ENCODE measurements at regions of chr12 and their contacts with region 1.

Region 1: DNA sequence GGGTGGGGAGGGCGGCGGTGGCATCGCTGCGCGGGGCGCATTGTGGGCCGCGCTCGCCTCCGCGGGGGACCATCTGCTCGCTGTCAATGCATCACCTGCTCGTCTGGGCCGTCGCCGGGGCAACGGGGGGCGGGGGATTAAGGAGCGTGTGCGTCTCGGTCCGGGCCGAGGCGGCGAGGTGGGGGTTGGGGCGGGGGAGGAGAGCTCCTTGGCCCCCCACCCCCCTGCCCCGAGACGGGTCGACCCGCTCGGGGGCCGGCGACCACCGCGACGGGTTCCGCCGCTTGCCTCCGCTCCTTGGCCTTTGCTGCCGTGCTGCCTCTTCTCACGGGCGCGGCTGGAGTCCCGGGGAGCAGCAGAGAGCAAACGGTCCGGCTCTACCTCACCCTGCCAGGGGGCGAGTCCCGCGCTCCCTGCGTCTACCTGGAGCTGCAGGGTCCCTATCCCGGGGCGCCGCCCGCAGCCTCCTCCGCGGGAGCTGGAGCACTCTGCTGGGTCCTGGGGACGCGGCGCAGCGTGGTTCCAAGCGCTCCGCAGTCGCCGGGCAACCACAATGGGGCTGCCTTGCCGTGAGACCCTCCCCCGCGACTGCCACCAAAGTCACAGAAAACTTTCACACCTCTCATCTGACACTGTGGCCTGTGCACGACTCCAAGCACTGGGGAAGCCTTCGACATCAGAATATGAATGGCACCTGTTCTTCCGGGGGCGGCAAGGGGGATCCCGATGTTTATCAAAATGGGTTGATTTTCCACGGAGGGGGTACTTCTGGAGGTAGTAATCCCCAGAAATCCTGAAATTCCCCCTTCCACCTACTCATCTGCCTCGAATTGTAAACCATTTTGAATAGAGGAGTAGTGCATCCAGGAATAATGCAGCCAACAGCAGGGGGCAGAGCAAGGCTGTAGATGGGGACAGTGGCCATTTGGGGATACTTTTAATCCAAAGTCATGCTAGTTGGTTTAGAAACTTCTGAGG is at the start of gene C12orf42:
- DNase-seq: peak; percentile 75 to 80
- ATAC-seq: peak; percentile 91 to 95
- H3K4me3 ChIP-seq: peak within 1 kb of the TSS; percentile 54
- H3K27ac ChIP-seq: peak within 1 kb of the TSS; percentile 26 to 72; a peak in 4 of 6 replicates
- H3K4me1 ChIP-seq: peaks cover 14% of the 10 kb centered on the region; the same call in 2 of the 3 replicates
- CTCF ChIP-seq: peak; percentile 86
- EP300 ChIP-seq: no peak
- POLR2A ChIP-seq: no peak
- RAD21 ChIP-seq: peak; percentile 85 to 92
- polyA plus RNA-seq, gene C12orf42: not detected in 2 replicates

Region 2: GRCh38 chr12:103326190-103326589 is 169.6 kb before region 1 on chr12:
- CTCF ChIA-PET with region 1: no interaction called
- POLR2A ChIA-PET with region 1: no interaction called
- DNase-seq: peak; percentile 9 to 39
- ATAC-seq: peak in 1 of 2 experiments; percentile 82; a peak in 3 of 6 replicates
- H3K4me3 ChIP-seq: no peak overlapping the region
- H3K27ac ChIP-seq: no peak overlapping the region
- H3K4me1 ChIP-seq: no peaks in the 10 kb centered on the region
- CTCF ChIP-seq: 0 out of 3 replicates have a peak, but pooled peaks have one; percentile 13
- EP300 ChIP-seq: no peak
- POLR2A ChIP-seq: no peak
- RAD21 ChIP-seq: peak in 1 of 2 experiments; percentile 37; a peak in 2 of 5 replicates

Region 3: GRCh38 chr12:103441437-103442181 is 54.2 kb before region 1 on chr12:
- CTCF ChIA-PET with region 1: no interaction called
- POLR2A ChIA-PET with region 1: no interaction called
- DNase-seq: no peak
- ATAC-seq: no peak
- H3K4me3 ChIP-seq: no peak overlapping the region
- H3K27ac ChIP-seq: no peak overlapping the region
- H3K4me1 ChIP-seq: no peaks in the 10 kb centered on the region
- CTCF ChIP-seq: no peak
- EP300 ChIP-seq: no peak
- POLR2A ChIP-seq: no peak
- RAD21 ChIP-seq: no peak

Region 4: DNA sequence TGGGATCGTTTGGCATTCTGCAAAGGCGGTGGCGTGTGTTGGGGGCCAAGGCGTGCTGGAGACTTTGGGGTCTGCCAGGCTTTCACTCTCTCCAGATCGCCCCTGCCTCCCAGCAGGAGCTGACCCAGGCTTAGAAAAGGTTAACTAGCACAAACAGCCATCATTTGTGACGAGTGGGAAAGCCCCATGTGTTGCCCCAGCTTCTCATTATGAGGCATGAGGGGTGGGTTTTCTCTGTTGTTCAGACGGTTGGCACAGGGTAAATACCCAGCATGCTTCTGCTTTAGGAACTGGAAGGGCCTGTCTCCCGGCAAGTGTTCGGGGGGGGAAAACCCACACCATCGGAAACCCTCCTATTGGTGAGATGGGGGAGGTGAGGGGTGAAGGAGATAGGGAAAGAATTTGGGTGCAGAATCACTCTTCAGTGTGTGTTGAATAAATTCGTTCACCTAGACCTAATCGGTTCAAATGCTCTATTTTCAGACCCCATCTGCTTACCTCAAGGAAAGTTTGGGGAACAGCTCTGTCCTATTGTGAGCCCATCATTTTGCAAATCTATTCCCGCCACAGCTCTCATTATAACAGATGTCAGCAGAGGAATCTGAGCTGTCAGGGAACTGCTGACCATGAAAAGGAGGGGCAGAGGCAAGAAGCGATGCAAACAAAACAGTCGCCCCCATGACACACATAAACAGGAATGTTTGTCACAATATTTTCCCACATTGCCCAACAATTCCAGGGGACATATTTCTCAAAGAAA is 34.7 kb after region 1 on chr12:
- CTCF ChIA-PET with region 1: interaction called, 11 read pairs
- POLR2A ChIA-PET with region 1: no interaction called
- DNase-seq: no peak
- ATAC-seq: no peak
- H3K4me3 ChIP-seq: no peak overlapping the region
- H3K27ac ChIP-seq: no peak overlapping the region
- H3K4me1 ChIP-seq: no peaks in the 10 kb centered on the region
- CTCF ChIP-seq: no peak
- EP300 ChIP-seq: no peak
- POLR2A ChIP-seq: no peak
- RAD21 ChIP-seq: no peak

Region 5: DNA sequence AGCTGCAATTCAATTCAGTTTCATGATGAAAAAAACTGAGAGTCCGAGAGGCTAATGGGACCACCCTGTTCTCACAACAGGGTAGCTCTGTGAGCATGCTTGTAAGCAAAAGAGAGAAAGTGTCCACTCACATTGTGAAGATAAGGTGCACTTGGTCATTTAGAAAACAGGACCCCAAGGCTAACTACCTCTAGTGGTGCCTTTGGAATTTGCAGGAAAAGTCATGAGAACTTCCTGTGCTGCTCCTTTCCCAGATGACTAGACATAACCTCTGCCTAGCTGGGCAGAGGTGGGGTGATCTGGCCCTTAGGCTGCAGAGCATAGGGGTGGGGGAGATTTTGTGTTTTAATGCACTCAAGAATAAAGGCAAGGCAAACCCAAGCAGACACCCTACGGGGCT is 210.2 kb after region 1 on chr12:
- CTCF ChIA-PET with region 1: no interaction called
- POLR2A ChIA-PET with region 1: no interaction called
- DNase-seq: peak; percentile 28 to 55
- ATAC-seq: peak; percentile 80 to 90
- H3K4me3 ChIP-seq: no peak overlapping the region
- H3K27ac ChIP-seq: no peak overlapping the region
- H3K4me1 ChIP-seq: no peaks in the 10 kb centered on the region
- CTCF ChIP-seq: peak; percentile 22; the same call in 1 of the 3 replicates
- EP300 ChIP-seq: no peak
- POLR2A ChIP-seq: no peak
- RAD21 ChIP-seq: no peak

Measured in A549 (cell line).